Gastrocnemius medialis (tissue), 4 donors: ENCODE measurements at regions of chr1 and their contacts with region 1.

Region 1: DNA sequence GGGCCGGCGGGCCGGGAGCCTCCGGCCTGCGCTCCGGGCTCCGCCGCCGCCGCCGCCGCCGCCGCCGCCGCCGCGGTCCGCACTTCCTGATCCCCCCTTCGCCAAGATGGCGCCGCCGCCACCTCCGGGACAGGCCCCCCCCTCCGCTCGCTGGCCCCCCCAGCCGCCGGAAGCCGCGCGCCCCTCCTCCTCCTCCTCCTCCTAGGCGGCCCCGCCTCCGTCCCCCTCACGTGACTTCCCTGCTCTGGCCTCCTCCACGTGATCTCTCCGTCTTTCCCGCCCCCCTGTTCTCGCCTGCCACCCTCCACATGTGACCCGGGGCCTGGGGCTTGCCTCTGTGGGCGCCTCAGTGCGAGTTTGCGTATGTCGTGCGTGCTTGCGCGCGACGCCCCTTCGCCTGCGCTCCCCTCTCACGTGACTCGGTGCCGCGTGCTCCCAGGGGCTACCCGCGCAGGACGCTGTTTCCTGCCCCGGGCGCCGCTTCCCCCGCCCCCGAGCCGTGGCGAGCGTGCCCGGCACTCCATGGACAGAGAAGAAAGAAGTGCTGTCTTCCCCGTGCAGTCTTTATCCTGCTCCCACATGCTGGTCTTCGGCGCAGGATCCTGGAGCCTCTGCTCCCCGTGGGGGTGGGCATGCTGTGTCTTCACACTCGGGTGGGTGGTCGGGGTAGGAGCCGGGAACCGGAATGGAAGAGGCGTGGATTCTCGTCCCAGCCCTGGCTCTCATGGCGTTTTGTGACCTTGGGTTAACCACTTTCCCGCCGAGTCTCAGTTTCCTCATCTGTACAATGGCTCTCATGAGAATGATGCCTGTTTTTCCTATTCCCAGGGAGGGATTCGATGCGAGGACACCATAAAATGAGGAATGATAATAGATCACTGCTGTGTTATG is at the start of gene UBE2Q1:
- DNase-seq: peak; percentile 100
- ATAC-seq: peak; percentile 87 to 89
- H3K4me3 ChIP-seq: peak within 1 kb of the TSS; percentile 66 to 90 (median 76)
- H3K27ac ChIP-seq: peak within 1 kb of the TSS; percentile 94 to 98 (median 97)
- H3K4me1 ChIP-seq: peaks cover 29 to 31% of the 10 kb centered on the region in 2 donors
- H3K27me3 ChIP-seq: no peaks in the 10 kb centered on the region
- CTCF ChIP-seq: peak in 1 of 5 experiments; percentile 35
- POLR2A ChIP-seq: peak; percentile 79 to 86
- total RNA-seq, gene UBE2Q1: 18.8 to 42.8 (median 24.1) TPM

Region 2: GRCh38 chr1:154220071-154220969 is 338.5 kb before region 1 on chr1 and contains the start of gene UBAP2L:
- in situ Hi-C with region 1: no loop called
- intact Hi-C with region 1: loop called (anchors 2 kb)
- DNase-seq: peak; percentile 99
- ATAC-seq: peak; percentile 91 to 93
- H3K4me3 ChIP-seq: peak within 1 kb of the TSS; percentile 82 to 96 (median 88)
- H3K27ac ChIP-seq: peak within 1 kb of the TSS; percentile 96 to 100 (median 98)
- H3K4me1 ChIP-seq: peaks cover 57 to 63% of the 10 kb centered on the region in 2 donors
- H3K27me3 ChIP-seq: no peaks in the 10 kb centered on the region
- CTCF ChIP-seq: no peak
- POLR2A ChIP-seq: peak; percentile 87 to 92
- total RNA-seq, gene UBAP2L: 38.5 to 72.8 (median 50.8) TPM

Region 3: GRCh38 chr1:154747740-154748404 is 189.1 kb after region 1 on chr1:
- in situ Hi-C with region 1: loop called in 1 of 4 experiments (anchors 25 kb)
- intact Hi-C with region 1: loop called (anchors 10 kb)
- DNase-seq: no peak
- ATAC-seq: no peak
- H3K4me3 ChIP-seq: no peak overlapping the region
- H3K27ac ChIP-seq: peak overlapping the region in 1 of 4 donors; percentile 32
- H3K4me1 ChIP-seq: peaks cover 15 to 16% of the 10 kb centered on the region in 2 donors
- H3K27me3 ChIP-seq: no peaks in the 10 kb centered on the region
- CTCF ChIP-seq: no peak
- POLR2A ChIP-seq: no peak

Region 4: GRCh38 chr1:154878371-154879022 is 319.7 kb after region 1 on chr1:
- in situ Hi-C with region 1: loop called in 2 of 4 experiments (anchors 10 kb)
- intact Hi-C with region 1: loop called (anchors 1 kb)
- DNase-seq: peak; percentile 65 to 79
- ATAC-seq: peak; percentile 80 to 84
- H3K4me3 ChIP-seq: no peak overlapping the region
- H3K27ac ChIP-seq: peak overlapping the region in 3 of 4 donors; percentile 29 to 69 (median 58)
- H3K4me1 ChIP-seq: peaks cover 3 to 4% of the 10 kb centered on the region in 2 donors
- H3K27me3 ChIP-seq: no peaks in the 10 kb centered on the region
- CTCF ChIP-seq: peak; percentile 82 to 96 (median 90)
- POLR2A ChIP-seq: no peak

Region 5: DNA sequence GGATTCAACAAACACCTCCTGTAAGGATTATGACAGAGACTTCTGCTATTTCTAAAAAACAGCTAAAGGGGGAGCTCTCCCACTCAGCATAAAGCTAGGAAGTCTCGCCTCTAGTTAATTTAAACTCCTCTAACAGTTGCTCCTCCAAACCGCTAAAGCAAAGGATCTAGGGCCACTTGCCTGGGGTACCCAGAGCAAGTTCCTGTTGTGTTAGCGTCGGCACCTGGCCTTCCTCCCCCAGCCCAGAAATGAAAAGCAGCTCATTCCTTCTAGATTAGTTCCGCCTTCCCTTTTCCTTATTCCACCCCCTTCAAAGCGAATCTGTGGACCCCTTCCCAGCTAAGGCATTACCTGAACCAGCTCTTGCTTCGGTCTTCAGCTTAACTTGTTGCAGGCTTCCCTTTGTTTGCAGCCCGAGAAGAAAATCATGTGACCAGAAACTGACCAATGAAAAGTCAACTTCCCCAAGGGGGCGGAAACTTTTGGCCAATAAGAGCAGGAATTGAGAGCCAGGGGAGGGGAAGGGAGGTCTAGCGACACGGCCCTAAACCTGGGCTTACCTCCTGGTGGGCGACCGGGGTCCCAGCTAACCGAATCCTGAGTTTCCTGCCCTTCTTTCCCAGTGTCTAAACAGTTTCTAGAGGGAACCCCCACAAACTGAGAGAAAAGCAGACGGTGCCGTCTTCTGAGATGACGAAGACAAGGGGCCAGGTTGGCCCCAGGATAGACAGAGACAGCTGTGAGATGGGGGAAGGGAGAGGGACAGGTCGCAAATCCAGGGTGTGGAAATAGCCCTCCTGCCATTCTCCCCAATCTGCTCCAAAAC is 397.1 kb after region 1 on chr1 and contains the start of gene PBXIP1:
- in situ Hi-C with region 1: no loop called
- intact Hi-C with region 1: no loop called
- DNase-seq: peak; percentile 76 to 89
- ATAC-seq: peak; percentile 93 to 95
- H3K4me3 ChIP-seq: peak within 1 kb of the TSS; percentile 67 to 77 (median 69)
- H3K27ac ChIP-seq: peak within 1 kb of the TSS; percentile 92 to 98 (median 94)
- H3K4me1 ChIP-seq: peaks cover 62 to 66% of the 10 kb centered on the region in 2 donors
- H3K27me3 ChIP-seq: no peaks in the 10 kb centered on the region
- CTCF ChIP-seq: no peak
- POLR2A ChIP-seq: peak; percentile 67 to 71
- total RNA-seq, gene PBXIP1: 126 to 171 (median 165) TPM

Region 6: DNA sequence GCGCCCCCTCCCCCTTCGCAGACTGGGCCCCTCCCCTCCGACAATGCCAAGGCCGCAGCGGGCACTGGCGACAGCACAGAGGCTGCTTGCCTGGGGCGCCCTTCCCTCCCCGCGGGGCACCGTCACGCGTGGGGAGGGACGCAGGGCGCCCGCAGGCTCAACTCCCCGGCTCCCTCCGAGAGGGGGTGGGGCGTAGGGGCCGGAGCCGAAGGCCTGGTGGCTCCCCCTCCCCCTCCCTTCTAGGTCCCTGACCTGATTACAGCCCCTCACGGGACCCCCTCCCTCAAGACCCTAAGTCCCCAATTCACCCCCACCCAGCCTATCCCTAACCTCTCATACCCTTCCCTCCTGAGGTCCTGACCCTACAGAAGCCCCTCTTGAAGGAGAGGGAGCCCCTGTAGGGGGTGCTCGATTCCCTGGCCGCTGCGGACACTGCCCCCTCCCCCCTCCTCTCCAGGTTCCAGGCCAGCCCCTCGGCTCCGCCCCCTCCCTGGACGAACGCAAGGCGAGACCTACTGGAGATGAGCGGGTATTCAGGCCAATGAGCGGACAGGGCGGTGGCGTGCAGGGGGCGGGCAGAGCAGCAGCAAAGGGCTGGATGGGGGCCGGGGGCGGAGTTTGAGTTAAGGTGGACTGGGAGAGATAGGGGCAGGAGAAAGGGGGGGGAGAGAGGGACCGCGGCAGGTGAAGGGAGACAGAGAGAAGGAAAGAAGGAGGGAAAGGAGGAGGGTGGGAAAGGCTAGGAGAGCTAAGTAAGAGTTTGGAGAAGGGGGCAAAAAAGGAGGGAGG is 443.0 kb after region 1 on chr1:
- in situ Hi-C with region 1: no loop called
- intact Hi-C with region 1: loop called (anchors 5 kb)
- DNase-seq: peak; percentile 100
- ATAC-seq: peak; percentile 45 to 54
- H3K4me3 ChIP-seq: peak overlapping the region; percentile 83 to 99 (median 94)
- H3K27ac ChIP-seq: peak overlapping the region; percentile 95 to 99 (median 98)
- H3K4me1 ChIP-seq: peaks cover 34 to 52% of the 10 kb centered on the region in 2 donors
- H3K27me3 ChIP-seq: no peaks in the 10 kb centered on the region
- CTCF ChIP-seq: peak in 2 of 5 experiments; percentile 13 to 55
- POLR2A ChIP-seq: peak; percentile 90 to 92